GM12878 (cell line): ENCODE measurements at regions of chr1 and their contacts with region 1.

Region 1: GRCh38 chr1:101288491-101288944 is 51.7 kb downstream of the S1PR1 start:
- DNase-seq: peak; percentile 69
- ATAC-seq: peak; percentile 71
- H3K4me3 ChIP-seq: no peak overlapping the region
- H3K27ac ChIP-seq: no peak overlapping the region
- H3K4me1 ChIP-seq: peaks cover 35% of the 10 kb centered on the region
- H3K27me3 ChIP-seq: no peaks in the 10 kb centered on the region
- CTCF ChIP-seq: peak; percentile 79 to 92 (median 90)
- EP300 ChIP-seq: no peak
- POLR2A ChIP-seq: no peak
- RAD21 ChIP-seq: peak; percentile 96

Region 2: GRCh38 chr1:100928128-100928527 is 360.4 kb before region 1 on chr1:
- CTCF ChIA-PET with region 1: interaction called, 91 read pairs
- POLR2A ChIA-PET with region 1: no interaction called
- RAD21 ChIA-PET with region 1: interaction called, 40 read pairs
- SMC1A ChIA-PET with region 1: interaction called, 102 read pairs
- in situ Hi-C with region 1: no loop called
- intact Hi-C with region 1: no loop called
- DNase-seq: no peak
- ATAC-seq: peak; percentile 47; the same call in 2 of the 3 replicates
- H3K4me3 ChIP-seq: no peak overlapping the region
- H3K27ac ChIP-seq: no peak overlapping the region
- H3K4me1 ChIP-seq: peaks cover 4% of the 10 kb centered on the region; the same call in 1 of the 2 replicates
- H3K27me3 ChIP-seq: no peaks in the 10 kb centered on the region
- CTCF ChIP-seq: no peak
- EP300 ChIP-seq: no peak
- POLR2A ChIP-seq: no peak
- RAD21 ChIP-seq: no peak

Region 3: GRCh38 chr1:101136739-101137138 is 151.8 kb before region 1 on chr1:
- CTCF ChIA-PET with region 1: interaction called, 131 read pairs
- POLR2A ChIA-PET with region 1: no interaction called
- RAD21 ChIA-PET with region 1: interaction called, 57 read pairs
- SMC1A ChIA-PET with region 1: interaction called, 118 read pairs
- in situ Hi-C with region 1: loop called (anchors 5 kb)
- intact Hi-C with region 1: loop called (anchors 1 kb)
- DNase-seq: peak; percentile 68
- ATAC-seq: peak; percentile 86
- H3K4me3 ChIP-seq: no peak overlapping the region
- H3K27ac ChIP-seq: no peak overlapping the region
- H3K4me1 ChIP-seq: peaks cover 17% of the 10 kb centered on the region
- H3K27me3 ChIP-seq: no peaks in the 10 kb centered on the region
- CTCF ChIP-seq: peak; percentile 29 to 61 (median 41); a peak in 4 of 6 replicates
- EP300 ChIP-seq: no peak
- POLR2A ChIP-seq: no peak
- RAD21 ChIP-seq: peak; percentile 83

Region 4: DNA sequence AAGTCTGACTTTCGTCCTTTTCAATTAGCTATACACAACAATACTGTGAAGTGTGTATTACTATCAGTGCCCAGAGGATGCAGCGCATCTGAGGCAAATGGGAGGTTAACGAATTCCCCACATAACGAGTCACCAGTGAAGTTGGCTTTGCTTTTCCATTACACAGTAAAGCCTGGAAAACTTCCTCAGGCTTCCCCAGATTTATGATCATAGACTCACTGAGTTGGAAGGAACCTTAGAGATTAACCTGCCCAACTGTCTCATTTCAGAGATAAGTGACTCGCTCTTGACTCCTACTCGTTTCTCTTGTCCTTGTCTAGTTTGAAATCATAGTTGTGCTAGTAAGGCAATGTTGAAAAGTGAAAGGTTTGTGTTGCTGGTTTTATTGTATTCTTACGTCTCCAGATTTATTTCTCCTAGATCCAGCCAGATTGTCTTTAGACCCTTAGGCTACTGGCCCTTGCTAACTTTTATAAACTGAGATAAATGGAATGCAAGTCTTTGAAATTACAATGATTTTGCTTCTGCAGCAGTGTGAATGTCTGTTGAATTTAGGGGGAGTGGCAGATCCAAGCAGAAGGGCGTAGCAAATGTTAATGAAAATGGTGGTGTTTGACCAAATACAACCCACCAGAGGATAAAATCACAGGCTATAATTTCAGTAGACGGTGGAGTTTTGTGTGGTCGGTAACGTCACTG is 34.4 kb before region 1 on chr1:
- CTCF ChIA-PET with region 1: interaction called, 58 read pairs
- POLR2A ChIA-PET with region 1: no interaction called
- RAD21 ChIA-PET with region 1: interaction called, 9 read pairs
- SMC1A ChIA-PET with region 1: interaction called, 34 read pairs
- in situ Hi-C with region 1: no loop called
- intact Hi-C with region 1: loop called (anchors 2 kb)
- DNase-seq: no peak
- ATAC-seq: no peak
- H3K4me3 ChIP-seq: no peak overlapping the region
- H3K27ac ChIP-seq: no peak overlapping the region
- H3K4me1 ChIP-seq: peaks cover 10% of the 10 kb centered on the region
- H3K27me3 ChIP-seq: no peaks in the 10 kb centered on the region
- CTCF ChIP-seq: no peak
- EP300 ChIP-seq: no peak
- POLR2A ChIP-seq: no peak
- RAD21 ChIP-seq: no peak

Region 5: DNA sequence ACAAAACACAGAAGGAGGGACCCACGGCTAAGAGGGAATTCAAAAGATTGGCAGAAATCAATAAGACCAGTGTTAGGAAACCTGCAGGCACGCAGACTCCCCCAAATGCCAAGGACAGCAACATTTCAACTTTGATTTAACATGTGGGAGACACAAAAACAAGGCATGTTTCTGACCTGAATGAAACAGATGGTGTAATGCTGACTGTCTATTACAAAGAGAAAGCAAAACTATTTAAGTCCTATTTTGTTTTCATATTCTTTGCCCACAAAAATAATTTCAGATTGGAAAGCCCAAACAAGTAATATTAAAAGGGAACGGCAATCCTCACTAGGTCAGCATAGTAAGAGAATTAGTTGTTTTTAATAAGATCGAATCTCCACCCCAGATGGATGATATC is 56.2 kb after region 1 on chr1:
- CTCF ChIA-PET with region 1: interaction called, 10 read pairs
- POLR2A ChIA-PET with region 1: no interaction called
- RAD21 ChIA-PET with region 1: interaction called, 4 read pairs
- SMC1A ChIA-PET with region 1: interaction called, 56 read pairs
- in situ Hi-C with region 1: no loop called
- intact Hi-C with region 1: no loop called
- DNase-seq: no peak
- ATAC-seq: peak; percentile 65; the same call in 2 of the 3 replicates
- H3K4me3 ChIP-seq: no peak overlapping the region
- H3K27ac ChIP-seq: no peak overlapping the region
- H3K4me1 ChIP-seq: no peaks in the 10 kb centered on the region
- H3K27me3 ChIP-seq: no peaks in the 10 kb centered on the region
- CTCF ChIP-seq: no peak
- EP300 ChIP-seq: no peak
- POLR2A ChIP-seq: no peak
- RAD21 ChIP-seq: no peak

Region 6: GRCh38 chr1:101444873-101445618 is 156.5 kb after region 1 on chr1:
- CTCF ChIA-PET with region 1: interaction called, 253 read pairs
- POLR2A ChIA-PET with region 1: interaction called, 3 read pairs
- RAD21 ChIA-PET with region 1: interaction called, 16 read pairs
- SMC1A ChIA-PET with region 1: interaction called, 240 read pairs
- in situ Hi-C with region 1: no loop called
- intact Hi-C with region 1: no loop called
- DNase-seq: no peak
- ATAC-seq: peak; percentile 33
- H3K4me3 ChIP-seq: no peak overlapping the region
- H3K27ac ChIP-seq: peak overlapping the region; percentile 62
- H3K4me1 ChIP-seq: peaks cover 20% of the 10 kb centered on the region
- H3K27me3 ChIP-seq: no peaks in the 10 kb centered on the region
- CTCF ChIP-seq: no peak
- EP300 ChIP-seq: no peak
- POLR2A ChIP-seq: no peak
- RAD21 ChIP-seq: no peak

Region 7: DNA sequence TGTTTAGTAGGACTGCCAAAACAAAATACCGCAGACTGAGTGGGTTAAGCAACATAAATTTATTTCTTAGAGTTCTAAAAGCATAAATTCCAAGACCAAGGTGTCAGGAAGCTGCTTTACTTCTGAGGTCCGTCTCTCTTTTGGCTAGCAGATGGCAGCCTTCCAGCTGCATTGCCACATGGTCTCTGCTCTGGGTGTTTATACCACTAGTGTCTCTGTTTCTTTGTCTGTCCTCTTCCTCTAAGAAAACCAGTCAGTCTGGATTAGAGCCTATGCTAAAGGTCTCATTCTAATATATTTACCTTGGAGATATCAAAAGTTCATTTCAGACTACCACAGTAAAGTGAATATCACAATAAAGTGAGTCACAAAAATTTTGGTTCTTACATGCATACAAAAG is 1300.0 kb after region 1 on chr1:
- CTCF ChIA-PET with region 1: no interaction called
- POLR2A ChIA-PET with region 1: no interaction called
- RAD21 ChIA-PET with region 1: no interaction called
- SMC1A ChIA-PET with region 1: no interaction called
- in situ Hi-C with region 1: no loop called
- intact Hi-C with region 1: no loop called
- DNase-seq: no peak
- ATAC-seq: no peak
- H3K4me3 ChIP-seq: no peak overlapping the region
- H3K27ac ChIP-seq: no peak overlapping the region
- H3K4me1 ChIP-seq: no peaks in the 10 kb centered on the region
- H3K27me3 ChIP-seq: no peaks in the 10 kb centered on the region
- CTCF ChIP-seq: no peak
- EP300 ChIP-seq: no peak
- POLR2A ChIP-seq: no peak
- RAD21 ChIP-seq: no peak